Activated CD8-positive, alpha-beta T cell treated with anti-CD3 and anti-CD28 coated beads, Interleukin-2, amount 10 ng/mL, durations not matched to agents 7 days and 5 days (primary cell): ENCODE measurements at regions of chr17 and their contacts with region 1.

Region 1: GRCh38 chr17:77444984-77445759 is 304.4 kb downstream of the SEC14L1 start:
- DNase-seq: peak; percentile 94
- ATAC-seq: peak; percentile 66
- H3K4me3 Mint-ChIP-seq: peak overlapping the region; percentile 82
- H3K27ac Mint-ChIP-seq: peak overlapping the region; percentile 90
- H3K4me1 Mint-ChIP-seq: peaks cover 96% of the 10 kb centered on the region
- H3K27me3 Mint-ChIP-seq: no peaks in the 10 kb centered on the region

Region 2: DNA sequence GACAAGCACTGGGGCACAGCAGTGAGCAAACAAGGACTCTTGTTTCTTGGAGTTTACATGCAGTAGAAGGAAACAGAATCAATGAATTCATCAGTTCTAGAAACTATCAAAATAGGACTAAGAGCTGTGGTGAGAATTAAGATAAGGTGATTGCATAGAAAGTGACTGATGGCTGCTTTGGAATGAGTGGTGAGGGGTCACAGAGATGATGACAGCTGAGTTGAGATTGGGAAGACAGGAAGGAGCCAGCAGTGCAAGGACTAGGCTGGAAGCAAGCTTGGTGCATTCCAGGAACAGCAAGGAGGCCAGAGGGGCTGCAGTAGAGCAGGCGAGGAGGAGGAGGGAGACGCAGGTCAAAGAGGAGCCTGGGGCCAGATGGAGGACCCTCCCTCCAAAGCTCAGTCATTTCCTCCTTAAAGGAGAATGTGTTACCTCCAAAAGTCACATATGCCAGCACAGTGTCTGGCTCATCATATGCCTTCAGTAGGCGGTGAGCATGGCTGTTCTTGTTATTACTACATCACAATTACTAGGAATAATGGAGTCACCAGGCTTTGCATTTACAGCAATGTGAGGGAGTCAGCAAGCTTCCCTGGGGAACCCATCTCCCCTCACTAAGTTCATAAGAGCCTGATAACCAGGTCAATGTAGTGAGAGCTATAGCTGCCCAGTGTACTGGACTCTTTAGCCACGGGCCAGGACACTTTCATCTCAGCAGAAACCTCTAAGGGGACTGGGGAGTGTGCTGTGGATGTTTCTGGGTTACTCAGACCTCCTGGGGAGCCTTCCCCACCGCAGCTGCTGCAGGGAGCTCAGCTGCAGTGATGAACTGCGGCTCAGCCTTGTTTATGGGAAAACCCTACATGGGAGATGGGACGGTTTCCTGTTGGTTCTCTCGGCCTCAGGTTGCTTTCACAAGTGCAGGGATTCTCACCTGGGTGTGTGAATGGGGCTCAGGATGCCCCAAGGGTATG is 147.2 kb before region 1 on chr17:
- CTCF ChIA-PET with region 1: no interaction called
- POLR2A ChIA-PET with region 1: no interaction called
- DNase-seq: no peak
- ATAC-seq: no peak
- H3K4me3 Mint-ChIP-seq: no peak overlapping the region
- H3K27ac Mint-ChIP-seq: no peak overlapping the region
- H3K4me1 Mint-ChIP-seq: no peaks in the 10 kb centered on the region
- H3K27me3 Mint-ChIP-seq: peaks cover 5% of the 10 kb centered on the region

Region 3: GRCh38 chr17:77308861-77309726 is 136.1 kb before region 1 on chr17:
- CTCF ChIA-PET with region 1: no interaction called
- POLR2A ChIA-PET with region 1: no interaction called
- DNase-seq: no peak
- ATAC-seq: no peak
- H3K4me3 Mint-ChIP-seq: no peak overlapping the region
- H3K27ac Mint-ChIP-seq: no peak overlapping the region
- H3K4me1 Mint-ChIP-seq: no peaks in the 10 kb centered on the region
- H3K27me3 Mint-ChIP-seq: no peaks in the 10 kb centered on the region

Region 4: DNA sequence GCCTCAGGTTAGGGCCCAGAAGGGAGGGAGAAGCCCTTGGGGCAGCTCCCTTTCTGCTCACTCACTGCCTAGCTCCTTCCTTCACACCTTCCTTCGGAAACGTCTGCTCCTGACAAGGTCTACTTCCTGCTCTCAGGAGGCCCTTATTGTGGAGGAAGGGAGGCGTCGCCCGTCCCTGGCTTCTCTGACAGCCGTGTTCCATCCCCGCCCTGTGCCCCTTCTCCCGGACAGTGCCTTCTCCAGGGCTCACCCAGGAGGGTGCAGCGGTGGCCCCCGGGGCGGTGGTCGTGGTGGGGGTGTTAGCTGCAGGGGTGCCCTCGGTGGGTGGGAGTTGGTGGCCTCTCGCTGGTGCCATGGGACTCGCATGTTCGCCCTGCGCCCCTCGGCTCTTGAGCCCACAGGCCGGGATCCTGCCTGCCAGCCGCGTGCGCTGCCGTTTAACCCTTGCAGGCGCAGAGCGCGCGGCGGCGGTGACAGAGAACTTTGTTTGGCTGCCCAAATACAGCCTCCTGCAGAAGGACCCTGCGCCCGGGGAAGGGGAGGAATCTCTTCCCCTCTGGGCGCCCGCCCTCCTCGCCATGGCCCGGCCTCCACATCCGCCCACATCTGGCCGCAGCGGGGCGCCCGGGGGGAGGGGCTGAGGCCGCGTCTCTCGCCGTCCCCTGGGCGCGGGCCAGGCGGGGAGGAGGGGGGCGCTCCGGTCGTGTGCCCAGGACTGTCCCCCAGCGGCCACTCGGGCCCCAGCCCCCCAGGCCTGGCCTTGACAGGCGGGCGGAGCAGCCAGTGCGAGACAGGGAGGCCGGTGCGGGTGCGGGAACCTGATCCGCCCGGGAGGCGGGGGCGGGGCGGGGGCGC is 72.5 kb before region 1 on chr17:
- CTCF ChIA-PET with region 1: interaction called, 11 read pairs
- POLR2A ChIA-PET with region 1: interaction called, 4 read pairs
- DNase-seq: peak; percentile 83
- ATAC-seq: peak; percentile 49
- H3K4me3 Mint-ChIP-seq: peak overlapping the region; percentile 79
- H3K27ac Mint-ChIP-seq: peak overlapping the region; percentile 88
- H3K4me1 Mint-ChIP-seq: peaks cover 56% of the 10 kb centered on the region
- H3K27me3 Mint-ChIP-seq: peaks cover 4% of the 10 kb centered on the region

Region 5: GRCh38 chr17:77420804-77421629 is 24.2 kb before region 1 on chr17:
- CTCF ChIA-PET with region 1: interaction called, 10 read pairs
- POLR2A ChIA-PET with region 1: interaction called, 9 read pairs
- DNase-seq: peak; percentile 55
- ATAC-seq: peak; percentile 54
- H3K4me3 Mint-ChIP-seq: peak overlapping the region; percentile 57
- H3K27ac Mint-ChIP-seq: peak overlapping the region; percentile 80
- H3K4me1 Mint-ChIP-seq: peaks cover 86% of the 10 kb centered on the region
- H3K27me3 Mint-ChIP-seq: no peaks in the 10 kb centered on the region

Region 6: DNA sequence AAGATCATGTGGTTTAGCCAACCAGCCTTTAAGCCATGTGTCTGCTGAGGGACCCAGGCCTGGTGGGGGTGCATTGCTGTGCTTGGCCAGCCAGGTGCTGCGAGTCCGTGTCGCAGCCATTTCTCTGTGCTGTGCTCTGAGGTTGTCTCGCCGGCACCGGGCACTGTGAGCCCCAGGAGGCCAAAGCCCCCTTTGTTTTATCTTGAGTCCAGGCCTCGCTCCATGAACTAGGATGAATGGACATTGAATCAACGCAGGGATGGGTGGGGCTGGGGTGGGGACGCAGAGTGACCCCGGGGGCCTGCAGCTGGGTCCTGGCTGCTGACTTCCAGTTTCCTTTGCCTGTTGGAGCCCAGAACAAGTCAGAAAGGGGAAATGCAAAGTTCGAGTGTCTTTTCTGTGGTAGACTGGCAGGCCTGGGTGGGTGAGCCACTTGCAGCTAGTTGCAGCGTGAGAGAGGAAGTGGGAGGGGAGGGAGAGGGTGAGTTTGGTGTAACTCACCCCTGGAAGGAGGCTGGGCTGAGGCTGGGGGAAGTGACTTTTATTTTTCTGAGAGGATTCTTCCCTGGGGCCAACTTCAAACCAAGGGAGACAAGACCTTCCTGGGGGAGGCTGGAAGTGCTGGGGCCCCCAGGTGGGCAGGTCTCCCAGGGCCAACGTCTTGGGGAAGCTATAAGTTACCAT is 20.3 kb after region 1 on chr17:
- CTCF ChIA-PET with region 1: interaction called, 10 read pairs
- POLR2A ChIA-PET with region 1: interaction called, 49 read pairs
- DNase-seq: peak; percentile 92
- ATAC-seq: peak; percentile 80
- H3K4me3 Mint-ChIP-seq: peak overlapping the region; percentile 63
- H3K27ac Mint-ChIP-seq: peak overlapping the region; percentile 91
- H3K4me1 Mint-ChIP-seq: peaks cover 90% of the 10 kb centered on the region
- H3K27me3 Mint-ChIP-seq: no peaks in the 10 kb centered on the region

Region 7: GRCh38 chr17:77494664-77495435 is 49.7 kb after region 1 on chr17:
- CTCF ChIA-PET with region 1: interaction called, 13 read pairs
- POLR2A ChIA-PET with region 1: interaction called, 3 read pairs
- DNase-seq: peak; percentile 83
- ATAC-seq: peak; percentile 66
- H3K4me3 Mint-ChIP-seq: no peak overlapping the region
- H3K27ac Mint-ChIP-seq: peak overlapping the region; percentile 78
- H3K4me1 Mint-ChIP-seq: peaks cover 40% of the 10 kb centered on the region
- H3K27me3 Mint-ChIP-seq: no peaks in the 10 kb centered on the region